Psoas muscle (tissue), 8 donors: ENCODE measurements at regions of chr10 and their contacts with region 1.

Region 1: DNA sequence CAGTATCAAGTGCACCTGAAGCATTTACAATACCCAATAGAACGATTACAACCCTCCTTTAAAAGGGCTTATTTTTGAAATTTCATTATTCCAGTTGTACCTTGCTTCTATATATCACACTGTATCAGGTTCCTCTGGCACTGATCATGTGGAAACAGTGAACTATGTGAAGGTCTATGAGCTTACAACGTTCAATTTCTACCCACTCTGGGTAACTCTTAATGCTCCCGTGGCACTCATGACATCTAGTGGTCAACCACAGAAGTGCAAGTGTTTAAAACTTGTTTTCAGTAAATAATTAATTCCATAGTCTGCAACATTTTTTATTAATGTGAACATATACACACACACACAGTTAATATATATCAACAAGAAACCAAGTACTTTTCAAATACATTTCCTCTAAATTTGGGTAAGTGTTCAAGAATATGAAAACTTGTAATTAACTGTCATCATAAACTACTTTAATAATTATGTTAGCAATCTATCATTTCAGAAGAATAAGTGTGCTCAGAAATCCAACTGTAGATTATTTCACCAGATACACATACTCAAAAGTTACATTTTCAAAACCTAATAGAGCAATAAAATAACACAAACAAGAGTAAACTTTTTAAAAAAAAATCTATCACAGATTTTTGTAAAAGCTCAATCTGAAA is 61.0 kb downstream of the MPP7 start:
- DNase-seq: no peak
- ATAC-seq: peak; percentile 77 to 88 (median 80)
- H3K4me3 ChIP-seq: no peak overlapping the region
- H3K27ac ChIP-seq: no peak overlapping the region
- H3K4me1 ChIP-seq: no peaks in the 10 kb centered on the region
- H3K27me3 ChIP-seq: no peaks in the 10 kb centered on the region
- CTCF ChIP-seq: peak; percentile 95

Region 2: GRCh38 chr10:27446091-27446918 is 795.6 kb before region 1 on chr10:
- intact Hi-C with region 1: loop called in 1 of 2 experiments (anchors 10 kb)
- DNase-seq: no peak
- ATAC-seq: peak in 1 of 4 donors; percentile 56
- H3K4me3 ChIP-seq: no peak overlapping the region
- H3K27ac ChIP-seq: no peak overlapping the region
- H3K4me1 ChIP-seq: no peaks in the 10 kb centered on the region
- H3K27me3 ChIP-seq: no peaks in the 10 kb centered on the region
- CTCF ChIP-seq: peak; percentile 50

Region 3: DNA sequence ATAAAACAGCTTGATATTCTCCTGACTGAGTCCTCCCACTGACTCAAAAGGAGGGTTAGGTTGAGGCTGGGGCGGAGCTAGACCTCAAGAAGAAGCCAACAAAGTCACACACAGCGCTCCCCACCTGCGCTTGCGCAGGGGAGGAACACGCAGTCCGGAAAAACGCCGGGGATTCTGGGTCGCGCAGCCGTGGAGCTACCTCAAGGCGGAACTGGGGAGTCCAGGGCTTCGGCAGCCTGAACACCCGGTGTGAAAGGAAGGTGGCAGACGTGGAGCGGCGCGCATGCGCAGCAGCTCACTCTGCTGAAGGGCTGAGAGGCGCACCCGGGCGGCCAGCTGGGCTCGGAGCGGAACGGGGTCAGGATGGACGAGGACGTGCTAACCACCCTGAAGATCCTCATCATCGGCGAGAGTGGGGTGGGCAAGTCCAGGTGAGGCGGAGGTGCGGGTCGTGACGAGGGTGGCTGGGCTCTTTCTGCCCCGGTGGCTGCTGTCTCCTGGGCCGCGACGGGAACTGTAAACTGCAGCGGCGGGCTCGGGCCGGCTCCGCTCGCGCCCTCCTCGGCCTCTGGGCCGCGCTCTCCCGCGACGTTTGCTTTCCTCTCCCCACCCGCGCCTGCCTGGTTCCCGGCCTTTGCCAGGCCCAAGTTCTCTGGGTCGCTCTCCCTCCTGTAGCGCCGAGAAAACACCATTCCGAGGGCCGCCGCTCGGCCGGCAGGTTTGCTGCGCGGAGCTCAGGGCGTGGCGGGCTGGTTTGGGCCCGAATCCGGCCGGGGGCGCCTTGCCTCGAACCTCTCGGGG is 737.7 kb before region 1 on chr10 and contains the start of gene RAB18:
- intact Hi-C with region 1: no loop called
- DNase-seq: peak; percentile 98 to 99
- ATAC-seq: peak; percentile 97 to 99 (median 98)
- H3K4me3 ChIP-seq: peak within 1 kb of the TSS; percentile 82
- H3K27ac ChIP-seq: peak within 1 kb of the TSS; percentile 91
- H3K4me1 ChIP-seq: peaks cover 32% of the 10 kb centered on the region
- H3K27me3 ChIP-seq: no peaks in the 10 kb centered on the region
- CTCF ChIP-seq: peak; percentile 12
- total RNA-seq, gene RAB18: 87.0 to 125 (median 102) TPM

Region 4: DNA sequence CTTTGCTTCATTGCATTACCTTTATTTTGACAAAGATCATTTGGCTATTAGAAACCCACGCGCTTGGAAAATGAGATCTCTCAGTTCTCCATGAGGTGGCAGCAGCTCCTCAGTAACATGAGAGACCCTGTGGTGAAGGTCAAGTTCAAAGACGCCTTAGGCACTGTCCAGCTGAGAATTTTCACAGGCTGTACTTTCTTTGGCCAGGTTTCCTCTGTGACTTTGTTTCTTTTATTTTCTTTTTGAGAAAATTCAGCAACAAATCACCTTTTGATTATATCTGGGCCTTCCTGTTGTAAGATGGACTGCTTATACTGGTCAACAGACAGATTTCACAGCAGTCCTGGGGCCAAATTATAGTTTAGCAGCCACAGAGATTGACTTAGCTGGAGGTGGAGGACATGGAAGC is 683.3 kb before region 1 on chr10:
- intact Hi-C with region 1: loop called (anchors 5 to 10 kb)
- DNase-seq: peak in 1 of 2 donors; percentile 29
- ATAC-seq: peak; percentile 80 to 92 (median 82)
- H3K4me3 ChIP-seq: no peak overlapping the region
- H3K27ac ChIP-seq: no peak overlapping the region
- H3K4me1 ChIP-seq: no peaks in the 10 kb centered on the region
- H3K27me3 ChIP-seq: no peaks in the 10 kb centered on the region
- CTCF ChIP-seq: peak; percentile 70

Region 5: DNA sequence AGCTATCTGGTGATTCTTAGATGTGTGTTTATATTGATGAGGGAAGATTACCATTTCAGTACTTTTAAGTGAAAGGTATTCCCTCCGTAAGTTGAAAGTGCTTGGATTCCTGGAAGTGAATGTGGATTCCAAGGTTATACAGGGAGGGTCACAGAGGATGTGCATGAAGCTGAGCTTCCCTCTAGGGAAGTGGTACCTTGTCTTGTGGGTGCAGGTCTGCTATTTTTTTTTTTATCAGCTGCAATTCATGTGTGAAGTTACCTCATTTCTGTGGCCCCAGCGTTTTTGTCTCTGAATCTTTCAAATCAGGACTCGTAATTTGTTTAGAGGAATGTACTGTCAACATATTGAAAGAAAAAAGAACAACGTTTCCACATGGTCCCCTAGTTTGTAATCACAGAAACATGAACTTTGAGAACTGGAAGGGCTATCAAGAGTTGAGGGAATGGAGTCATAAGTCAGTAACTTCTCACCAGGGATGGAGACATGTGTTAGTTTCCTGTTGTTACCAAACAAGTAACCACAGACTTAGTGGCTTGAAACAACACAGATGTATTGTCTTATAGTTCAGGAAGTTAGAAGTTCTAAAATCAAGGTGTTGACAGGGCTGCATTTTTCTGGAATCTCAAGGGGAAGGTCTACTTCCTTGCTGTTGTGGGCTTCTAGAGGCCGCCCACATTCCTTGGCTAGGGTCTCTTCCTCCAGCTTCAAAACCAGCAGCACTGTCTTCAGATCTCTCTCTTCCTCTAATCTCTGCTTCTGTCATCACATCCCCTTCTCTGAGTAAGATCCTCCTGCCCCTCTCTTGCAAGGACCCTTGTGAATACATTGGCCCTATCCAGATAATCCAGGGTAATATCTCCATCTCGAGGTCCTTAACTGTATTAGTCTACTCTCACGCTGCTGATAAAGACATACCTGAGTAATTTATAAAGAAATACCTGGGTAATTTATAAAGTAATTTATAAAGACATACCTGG is 673.4 kb before region 1 on chr10:
- intact Hi-C with region 1: loop called in 1 of 2 experiments (anchors 10 kb)
- DNase-seq: no peak
- ATAC-seq: no peak
- H3K4me3 ChIP-seq: no peak overlapping the region
- H3K27ac ChIP-seq: no peak overlapping the region
- H3K4me1 ChIP-seq: no peaks in the 10 kb centered on the region
- H3K27me3 ChIP-seq: no peaks in the 10 kb centered on the region
- CTCF ChIP-seq: no peak

Region 6: GRCh38 chr10:27742195-27743011 is 499.5 kb before region 1 on chr10:
- intact Hi-C with region 1: loop called in 1 of 2 experiments (anchors 1 kb)
- DNase-seq: peak; percentile 85 to 86
- ATAC-seq: peak; percentile 87 to 92 (median 90)
- H3K4me3 ChIP-seq: peak overlapping the region; percentile 75
- H3K27ac ChIP-seq: peak overlapping the region; percentile 37
- H3K4me1 ChIP-seq: peaks cover 22% of the 10 kb centered on the region
- H3K27me3 ChIP-seq: peaks cover 0 to 59% (median 34%) of the 10 kb centered on the region in 3 donors
- CTCF ChIP-seq: peak; percentile 77

Region 7: GRCh38 chr10:27752673-27753237 is 489.1 kb before region 1 on chr10:
- intact Hi-C with region 1: no loop called
- DNase-seq: no peak
- ATAC-seq: no peak
- H3K4me3 ChIP-seq: no peak overlapping the region
- H3K27ac ChIP-seq: no peak overlapping the region
- H3K4me1 ChIP-seq: no peaks in the 10 kb centered on the region
- H3K27me3 ChIP-seq: peaks cover 0 to 30% (median 4%) of the 10 kb centered on the region in 3 donors
- CTCF ChIP-seq: no peak